ENCODE measurements at regions of chr6 and their contacts with region 1.

Region 1: DNA sequence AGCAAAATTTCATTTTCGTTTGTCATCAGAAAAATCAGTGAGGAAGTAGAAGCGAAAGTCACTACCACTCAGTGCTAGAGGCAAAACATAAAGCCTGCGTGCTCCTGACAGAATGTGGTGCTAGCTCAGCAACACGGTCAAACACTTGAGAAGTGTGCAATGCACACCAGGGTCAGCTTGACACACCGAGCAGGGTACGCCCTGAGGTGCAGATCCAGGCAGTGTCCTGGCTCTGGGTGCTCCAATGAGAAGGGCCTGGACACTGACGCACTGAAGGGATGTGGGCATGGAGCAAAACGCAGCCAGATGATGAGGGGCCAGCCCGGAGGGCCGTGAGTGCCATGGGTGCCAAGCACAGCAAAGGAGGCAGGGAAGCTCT is 5.9 kb downstream of the RNASET2 start:
- DNase-seq: peak; percentile 79
- H3K4me3 Mint-ChIP-seq: peak overlapping the region; percentile 95
- H3K27ac Mint-ChIP-seq: peak overlapping the region; percentile 96
- H3K4me1 Mint-ChIP-seq: peaks cover 51% of the 10 kb centered on the region
- H3K27me3 Mint-ChIP-seq: no peaks in the 10 kb centered on the region

Region 2: GRCh38 chr6:166540631-166541331 is 409.7 kb before region 1 on chr6:
- intact Hi-C with region 1: loop called (anchors 5 kb)
- DNase-seq: peak; percentile 82
- H3K4me3 Mint-ChIP-seq: peak overlapping the region; percentile 70
- H3K27ac Mint-ChIP-seq: peak overlapping the region; percentile 86
- H3K4me1 Mint-ChIP-seq: peaks cover 23% of the 10 kb centered on the region
- H3K27me3 Mint-ChIP-seq: no peaks in the 10 kb centered on the region

Region 3: DNA sequence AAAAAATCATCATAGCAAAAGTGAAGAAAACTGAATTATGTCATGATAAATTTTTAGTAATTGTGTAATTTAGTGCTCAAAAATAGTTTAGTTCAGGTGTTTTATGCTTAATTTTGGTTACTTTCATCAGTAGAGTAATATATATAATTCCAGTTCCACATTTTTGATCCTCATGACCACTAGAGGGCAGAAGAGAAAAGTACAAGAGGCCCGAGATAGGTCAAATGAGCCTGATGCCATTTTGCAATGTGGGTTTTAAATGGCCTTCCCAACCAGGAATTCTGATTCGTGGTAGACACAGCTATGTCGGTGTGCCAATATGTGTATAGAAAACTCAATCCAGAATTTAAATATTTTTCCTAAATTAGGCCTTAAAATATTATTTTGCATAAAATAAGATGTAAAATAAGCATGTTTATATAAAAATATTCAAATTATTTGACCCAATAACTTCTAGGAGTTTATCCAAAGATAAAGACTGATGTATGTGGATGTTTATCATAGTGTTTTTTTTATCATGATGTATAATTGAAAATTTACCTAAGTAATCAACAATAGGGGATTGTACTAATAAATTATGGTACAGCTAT is 163.6 kb before region 1 on chr6:
- intact Hi-C with region 1: loop called (anchors 1 kb)
- DNase-seq: peak; percentile 78
- H3K4me3 Mint-ChIP-seq: no peak overlapping the region
- H3K27ac Mint-ChIP-seq: no peak overlapping the region
- H3K4me1 Mint-ChIP-seq: no peaks in the 10 kb centered on the region
- H3K27me3 Mint-ChIP-seq: peaks cover 12% of the 10 kb centered on the region

Region 4: DNA sequence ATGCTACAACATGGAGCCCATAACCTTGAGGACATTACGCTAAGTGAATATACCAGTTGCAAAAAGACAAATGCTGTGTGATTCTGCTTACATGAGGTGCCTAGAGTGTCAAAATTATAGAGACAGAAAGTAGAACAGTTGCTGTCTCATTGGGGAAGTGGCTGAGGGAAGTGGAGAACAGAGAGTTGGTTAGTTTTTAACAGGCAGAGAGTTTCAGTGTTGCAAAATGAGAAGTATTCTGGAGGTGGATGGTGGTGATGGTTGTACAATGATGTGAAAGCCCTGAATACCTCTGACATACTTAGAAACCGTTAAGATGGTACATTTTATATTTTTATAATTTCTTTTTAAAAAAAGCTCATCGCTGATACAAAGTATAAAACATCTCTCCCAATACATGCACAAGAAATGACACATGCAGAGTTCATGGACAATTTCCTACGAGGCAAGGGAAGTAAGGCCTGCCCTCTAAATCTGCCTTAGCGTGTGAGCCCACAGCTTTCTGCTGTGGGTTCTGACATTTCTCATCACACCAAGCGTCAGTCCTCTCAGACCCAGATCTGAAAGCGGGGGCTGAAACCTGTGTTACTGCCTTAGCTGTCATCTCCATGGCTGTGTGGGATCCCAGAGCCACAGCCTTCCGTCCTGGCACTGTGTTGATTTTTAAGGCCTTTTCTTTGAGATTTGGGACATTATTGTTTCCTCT is 120.1 kb before region 1 on chr6:
- intact Hi-C with region 1: loop called (anchors 2 kb)
- DNase-seq: no peak
- H3K4me3 Mint-ChIP-seq: no peak overlapping the region
- H3K27ac Mint-ChIP-seq: peak overlapping the region; percentile 26
- H3K4me1 Mint-ChIP-seq: peaks cover 10% of the 10 kb centered on the region
- H3K27me3 Mint-ChIP-seq: no peaks in the 10 kb centered on the region

Region 5: DNA sequence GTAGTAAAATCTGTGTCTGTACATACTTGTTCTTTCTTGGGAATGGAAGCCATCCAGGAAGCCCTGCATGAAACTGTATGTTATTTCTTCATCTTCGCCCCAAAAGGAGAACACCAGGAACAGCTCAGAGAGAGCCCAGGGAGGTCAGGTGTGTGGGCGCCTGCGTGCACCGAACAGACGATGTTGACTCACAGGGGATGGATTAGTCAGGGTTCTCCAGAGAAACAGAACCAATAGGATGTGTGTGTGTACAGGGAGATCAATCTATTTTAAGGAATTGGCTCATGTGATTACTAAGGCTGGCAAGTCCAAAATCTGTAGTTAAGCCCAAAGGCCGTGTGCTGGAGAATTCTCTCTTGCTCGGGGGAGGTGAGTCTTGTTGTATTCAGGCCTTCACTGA is 39.8 kb before region 1 on chr6:
- intact Hi-C with region 1: loop called (anchors 5 kb)
- DNase-seq: no peak
- H3K4me3 Mint-ChIP-seq: no peak overlapping the region
- H3K27ac Mint-ChIP-seq: peak overlapping the region; percentile 34
- H3K4me1 Mint-ChIP-seq: peaks cover 40% of the 10 kb centered on the region
- H3K27me3 Mint-ChIP-seq: no peaks in the 10 kb centered on the region

Region 6: GRCh38 chr6:166989427-166990032 is 39.1 kb after region 1 on chr6:
- intact Hi-C with region 1: loop called (anchors 2 kb)
- DNase-seq: peak; percentile 89
- H3K4me3 Mint-ChIP-seq: no peak overlapping the region
- H3K27ac Mint-ChIP-seq: no peak overlapping the region
- H3K4me1 Mint-ChIP-seq: peaks cover 44% of the 10 kb centered on the region
- H3K27me3 Mint-ChIP-seq: no peaks in the 10 kb centered on the region

Region 7: GRCh38 chr6:167047554-167047953 is 97.1 kb after region 1 on chr6:
- intact Hi-C with region 1: loop called (anchors 2 kb)
- DNase-seq: peak; percentile 81
- H3K4me3 Mint-ChIP-seq: peak overlapping the region; percentile 35
- H3K27ac Mint-ChIP-seq: peak overlapping the region; percentile 74
- H3K4me1 Mint-ChIP-seq: peaks cover 21% of the 10 kb centered on the region
- H3K27me3 Mint-ChIP-seq: no peaks in the 10 kb centered on the region